ENCODE measurements at regions of chr3 and their contacts with region 1.

Region 1: GRCh38 chr3:183824751-183825455 is 474 bp downstream of the MAP6D1 start:
- DNase-seq: peak; percentile 7

Region 2: DNA sequence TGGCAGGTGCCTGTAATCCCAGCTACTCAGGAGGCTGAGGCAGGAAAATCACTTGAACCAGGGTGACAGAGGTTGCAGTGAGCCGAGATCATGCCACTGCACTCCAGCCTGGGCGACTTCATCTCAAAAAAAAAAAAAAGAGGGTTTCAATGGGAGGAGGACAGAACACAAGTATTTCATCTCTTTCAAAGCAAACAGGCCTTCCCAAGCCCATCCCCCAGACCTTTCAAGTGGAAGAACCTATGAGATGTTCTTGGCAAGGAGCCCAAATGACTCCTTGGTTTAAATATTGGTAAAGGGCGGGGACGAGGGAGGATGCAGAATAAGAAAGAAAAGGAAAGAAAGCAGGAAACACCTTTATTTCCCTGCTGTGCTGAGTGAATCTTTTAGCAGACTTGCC is 334.2 kb before region 1 on chr3:
- in situ Hi-C with region 1: loop called (anchors 25 kb)
- DNase-seq: peak; percentile 39

Region 3: DNA sequence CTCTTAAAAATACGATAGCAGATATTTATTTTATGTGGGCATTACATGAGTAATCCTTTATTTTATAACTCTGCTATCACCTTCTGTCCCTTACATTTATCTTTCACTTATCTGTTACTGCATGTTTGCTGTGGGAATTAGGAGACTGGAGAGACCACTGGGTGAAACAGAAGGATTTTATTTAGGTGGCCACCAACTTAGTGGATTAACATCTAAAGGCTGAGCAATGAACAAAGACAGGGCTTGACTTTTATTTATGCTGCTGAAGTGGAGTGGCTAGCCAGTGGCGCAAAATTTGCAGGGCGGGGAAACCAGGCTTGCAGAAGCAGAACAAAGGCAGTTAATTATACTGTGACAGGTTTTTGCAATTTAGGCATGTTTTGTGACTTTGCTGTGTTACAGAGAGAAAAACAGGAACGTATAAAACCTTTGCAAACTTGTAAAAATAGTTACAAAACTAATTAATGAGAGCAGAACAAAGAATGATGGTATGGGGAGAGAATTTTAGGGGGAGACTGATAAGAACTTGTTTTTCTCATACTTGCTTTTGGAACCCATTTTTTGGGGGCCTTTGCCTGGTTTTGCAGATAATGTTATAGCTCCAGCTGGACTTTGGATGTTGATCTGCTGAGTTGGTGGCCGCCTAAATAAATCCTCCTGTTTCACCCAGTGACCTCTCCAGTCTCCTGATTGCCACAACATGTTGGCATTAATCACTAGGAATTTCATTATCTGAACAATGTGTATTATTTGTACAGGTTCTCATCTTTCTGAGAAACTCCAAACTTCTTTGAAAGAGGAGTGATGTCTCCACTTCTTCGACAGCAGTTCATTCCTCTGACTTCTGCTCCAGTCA is 171.5 kb before region 1 on chr3:
- in situ Hi-C with region 1: no loop called
- DNase-seq: no peak

Region 4: GRCh38 chr3:184005941-184006507 is 181.1 kb after region 1 on chr3:
- in situ Hi-C with region 1: no loop called
- DNase-seq: peak; percentile 73

Region 5: DNA sequence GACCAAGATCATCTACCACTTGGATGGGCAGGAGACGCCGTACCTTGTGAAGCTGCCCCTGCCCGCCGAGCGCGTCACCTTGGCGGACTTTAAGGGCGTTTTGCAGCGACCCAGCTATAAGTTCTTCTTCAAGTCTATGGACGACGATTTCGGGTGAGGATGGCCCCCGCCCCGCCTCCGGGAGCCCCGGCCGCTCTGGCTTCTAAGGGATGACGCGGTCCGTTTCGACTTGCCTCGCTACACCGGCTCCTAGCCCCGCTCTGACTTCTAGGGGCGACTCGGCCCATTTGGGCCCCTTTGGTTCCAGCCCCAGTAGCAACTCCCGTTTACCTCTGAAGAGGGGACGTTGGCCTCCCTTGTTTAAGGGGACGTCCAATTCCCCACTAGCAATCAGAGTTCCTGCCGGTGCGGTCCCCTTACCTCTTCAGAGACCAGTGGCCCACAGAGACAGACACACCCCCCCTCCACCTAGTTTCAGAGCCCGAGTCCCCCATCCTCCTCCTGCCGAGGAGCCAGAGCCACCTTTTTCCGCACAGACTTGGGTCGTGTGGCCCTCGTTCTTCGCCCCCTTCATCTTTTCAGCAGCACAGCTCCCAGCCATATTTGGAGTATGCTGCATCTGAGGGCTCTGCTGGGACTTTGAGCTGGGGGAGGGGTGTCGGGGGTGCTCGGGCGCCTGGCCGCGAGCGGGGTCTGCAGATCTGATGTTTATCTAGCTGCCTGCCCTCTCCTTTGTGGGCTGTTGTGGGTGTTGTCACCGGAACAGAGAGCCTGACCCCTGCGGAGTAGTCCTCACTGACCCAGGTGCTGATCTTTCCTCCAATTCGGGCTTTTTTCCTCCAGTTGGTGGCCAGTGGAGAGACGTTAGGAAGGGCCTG is 331.0 kb after region 1 on chr3:
- in situ Hi-C with region 1: no loop called
- DNase-seq: peak; percentile 35